PC-3 (cell line): ENCODE measurements at regions of chr21 and their contacts with region 1.

Region 1: GRCh38 chr21:42496122-42496900 is at the start of gene RSPH1:
- DNase-seq: peak; percentile 99
- ATAC-seq: peak; percentile 98
- H3K4me3 ChIP-seq: peak within 1 kb of the TSS; percentile 66
- H3K27ac ChIP-seq: 0 out of 2 replicates have a peak within 1 kb of the TSS, but pooled peaks have one; percentile 12
- H3K4me1 ChIP-seq: peaks cover 13% of the 10 kb centered on the region
- H3K27me3 ChIP-seq: no peaks in the 10 kb centered on the region
- CTCF ChIP-seq: 0 out of 2 replicates have a peak, but pooled peaks have one; percentile 24
- total RNA-seq, gene RSPH1: 0.51 and 0.98 TPM in 2 replicates

Region 2: GRCh38 chr21:42467140-42467983 is 28.9 kb before region 1 on chr21:
- CTCF ChIA-PET with region 1: no interaction called
- POLR2A ChIA-PET with region 1: interaction called, 8 read pairs
- intact Hi-C with region 1: loop called (anchors 1 kb)
- DNase-seq: peak; percentile 50
- ATAC-seq: peak; percentile 34
- H3K4me3 ChIP-seq: no peak overlapping the region
- H3K27ac ChIP-seq: peak overlapping the region; percentile 83
- H3K4me1 ChIP-seq: peaks cover 21% of the 10 kb centered on the region
- H3K27me3 ChIP-seq: no peaks in the 10 kb centered on the region
- CTCF ChIP-seq: peak; percentile 62

Region 3: GRCh38 chr21:42513985-42514882 is 17.9 kb after region 1 on chr21:
- CTCF ChIA-PET with region 1: no interaction called
- POLR2A ChIA-PET with region 1: no interaction called
- intact Hi-C with region 1: loop called (anchors 2 kb)
- DNase-seq: peak; percentile 44
- ATAC-seq: peak; percentile 37
- H3K4me3 ChIP-seq: peak overlapping the region; percentile 83
- H3K27ac ChIP-seq: peak overlapping the region; percentile 92
- H3K4me1 ChIP-seq: peaks cover 44% of the 10 kb centered on the region
- H3K27me3 ChIP-seq: no peaks in the 10 kb centered on the region
- CTCF ChIP-seq: no peak

Region 4: DNA sequence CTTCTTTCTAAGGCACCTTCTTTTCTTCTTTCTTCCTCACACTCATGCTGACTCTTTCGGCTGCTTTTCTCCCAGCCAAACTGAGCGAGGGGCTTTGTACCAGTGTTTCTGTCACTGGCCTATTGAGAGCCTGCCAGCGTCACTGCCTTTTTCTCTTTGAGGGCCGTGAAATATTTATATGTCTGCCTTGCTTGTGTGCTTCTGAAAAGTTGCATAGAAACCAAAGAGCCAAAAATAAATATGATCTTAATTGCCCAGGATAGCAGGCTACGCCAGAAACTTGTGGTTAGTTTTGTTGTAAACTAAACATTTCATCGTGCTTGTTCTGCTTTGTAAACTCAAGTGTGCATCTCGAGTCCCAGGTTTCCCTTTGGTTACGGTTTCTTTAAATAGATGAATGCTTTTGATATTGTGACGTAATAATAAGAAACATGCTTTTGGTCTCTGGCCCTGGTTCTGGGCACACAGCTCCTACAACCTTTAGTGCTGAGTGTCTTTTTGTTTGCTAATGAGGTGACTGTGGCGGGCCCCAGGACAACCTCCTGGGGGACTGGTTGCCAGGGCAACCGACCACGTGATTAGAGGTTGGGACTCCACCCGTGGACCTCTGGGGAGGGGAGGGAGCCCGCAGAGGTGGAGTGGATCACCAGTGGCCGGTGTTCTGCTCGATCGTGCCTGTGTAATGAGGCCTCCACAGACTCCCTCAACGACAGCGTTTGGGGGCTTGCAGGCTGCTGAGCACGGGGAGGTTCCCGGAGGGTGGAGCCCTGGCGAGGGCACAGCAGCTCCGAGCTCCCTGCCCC is 28.2 kb after region 1 on chr21:
- CTCF ChIA-PET with region 1: no interaction called
- POLR2A ChIA-PET with region 1: no interaction called
- intact Hi-C with region 1: loop called (anchors 1 kb)
- DNase-seq: peak; percentile 22
- ATAC-seq: peak; percentile 65
- H3K4me3 ChIP-seq: no peak overlapping the region
- H3K27ac ChIP-seq: peak overlapping the region; percentile 55
- H3K4me1 ChIP-seq: peaks cover 20% of the 10 kb centered on the region
- H3K27me3 ChIP-seq: no peaks in the 10 kb centered on the region
- CTCF ChIP-seq: no peak

Region 5: DNA sequence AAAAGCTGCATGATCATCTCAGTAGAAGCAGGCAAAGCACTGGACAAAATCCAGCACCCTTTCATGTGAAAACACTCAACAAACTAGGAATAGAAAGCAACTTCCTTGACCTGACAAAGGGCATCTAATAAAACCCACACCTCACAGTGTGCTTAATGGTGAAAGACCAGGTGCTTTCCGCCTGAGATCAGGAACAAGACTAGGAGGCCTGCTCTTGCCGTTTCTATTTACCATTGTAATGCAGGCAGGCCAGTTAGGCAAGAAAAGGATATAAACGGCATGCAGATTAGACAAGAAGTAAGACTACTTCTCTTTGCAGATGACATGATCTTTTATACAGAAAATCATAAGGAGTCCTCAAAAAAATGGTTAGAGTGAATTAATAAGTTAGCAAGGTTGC is 54.5 kb after region 1 on chr21:
- CTCF ChIA-PET with region 1: no interaction called
- POLR2A ChIA-PET with region 1: no interaction called
- intact Hi-C with region 1: no loop called
- DNase-seq: no peak
- ATAC-seq: no peak
- H3K4me3 ChIP-seq: no peak overlapping the region
- H3K27ac ChIP-seq: no peak overlapping the region
- H3K4me1 ChIP-seq: no peaks in the 10 kb centered on the region
- H3K27me3 ChIP-seq: no peaks in the 10 kb centered on the region
- CTCF ChIP-seq: no peak

Region 6: GRCh38 chr21:42652527-42653230 is 156.4 kb after region 1 on chr21:
- CTCF ChIA-PET with region 1: no interaction called
- POLR2A ChIA-PET with region 1: no interaction called
- intact Hi-C with region 1: no loop called
- DNase-seq: peak; percentile 41
- ATAC-seq: peak; percentile 72
- H3K4me3 ChIP-seq: no peak overlapping the region
- H3K27ac ChIP-seq: no peak overlapping the region
- H3K4me1 ChIP-seq: peaks cover 23% of the 10 kb centered on the region
- H3K27me3 ChIP-seq: peaks cover 67% of the 10 kb centered on the region
- CTCF ChIP-seq: peak; percentile 52

Region 7: GRCh38 chr21:42674351-42674940 is 178.1 kb after region 1 on chr21:
- CTCF ChIA-PET with region 1: no interaction called
- POLR2A ChIA-PET with region 1: no interaction called
- intact Hi-C with region 1: no loop called
- DNase-seq: no peak
- ATAC-seq: no peak
- H3K4me3 ChIP-seq: no peak overlapping the region
- H3K27ac ChIP-seq: no peak overlapping the region
- H3K4me1 ChIP-seq: peaks cover 37% of the 10 kb centered on the region
- H3K27me3 ChIP-seq: peaks cover 45% of the 10 kb centered on the region
- CTCF ChIP-seq: no peak